H1 (cell line): ENCODE measurements at regions of chr12 and their contacts with region 1.

Region 1: DNA sequence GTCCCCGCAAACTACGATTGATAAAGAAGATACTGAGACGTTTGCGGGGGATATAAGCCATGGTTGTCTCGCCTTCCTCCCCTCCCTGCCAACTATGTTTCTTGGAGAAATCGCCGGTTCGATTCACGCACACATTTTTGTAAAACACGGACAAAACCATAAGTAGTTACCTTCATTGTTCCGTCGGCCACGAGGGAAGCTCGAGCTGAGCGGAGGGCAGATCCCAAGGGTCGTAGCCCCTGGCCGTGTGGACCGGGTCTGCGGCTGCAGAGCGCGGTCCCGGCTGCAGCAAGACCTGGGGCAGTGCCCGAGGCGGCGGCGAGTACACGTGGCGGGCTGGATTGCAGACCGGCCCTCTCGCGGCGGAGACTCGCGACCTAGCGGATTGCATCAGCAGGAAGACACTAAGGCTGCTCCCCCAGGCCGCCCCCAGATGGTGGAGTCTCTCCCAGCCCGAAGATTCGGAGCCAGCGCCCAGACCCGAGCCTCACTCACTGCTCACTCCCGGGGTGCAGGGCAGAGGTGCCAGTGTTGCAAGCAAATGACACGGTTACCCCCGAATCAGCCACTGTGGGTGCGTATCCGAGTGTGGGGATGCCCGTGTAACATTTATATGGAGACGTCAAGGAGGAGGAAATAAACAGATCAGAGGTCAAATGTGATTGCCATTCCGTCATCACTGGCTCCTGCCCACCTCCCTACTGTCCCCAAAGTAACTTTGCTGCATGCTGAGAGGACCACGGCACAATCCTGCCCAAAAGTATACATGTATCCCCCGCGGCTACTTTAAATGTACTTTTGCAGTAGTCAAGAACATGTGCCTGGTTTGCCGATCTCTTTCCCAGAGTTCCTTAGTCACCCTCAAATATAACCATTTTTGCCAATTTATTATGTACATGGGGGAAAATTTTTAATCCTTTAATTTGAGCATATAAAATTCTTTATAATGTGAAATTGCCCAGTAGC is at the start of gene BCAT1:
- DNase-seq: peak; percentile 57 to 79
- H3K4me3 ChIP-seq: peak within 1 kb of the TSS; percentile 92 to 96 (median 94)
- H3K27ac ChIP-seq: peak within 1 kb of the TSS; percentile 96
- H3K4me1 ChIP-seq: peaks cover 6 to 29% (median 25%) of the 10 kb centered on the region in 4 experiments; a peak in 6 of 7 replicates
- H3K27me3 ChIP-seq: no peaks in the 10 kb centered on the region
- CTCF ChIP-seq: no peak
- EP300 ChIP-seq: no peak
- POLR2A ChIP-seq: peak; percentile 78 to 90
- RAD21 ChIP-seq: peak in 1 of 2 experiments; percentile 2; a peak in 1 of 4 replicates
- total RNA-seq, gene BCAT1: 256 and 263 TPM in 2 replicates

Region 2: DNA sequence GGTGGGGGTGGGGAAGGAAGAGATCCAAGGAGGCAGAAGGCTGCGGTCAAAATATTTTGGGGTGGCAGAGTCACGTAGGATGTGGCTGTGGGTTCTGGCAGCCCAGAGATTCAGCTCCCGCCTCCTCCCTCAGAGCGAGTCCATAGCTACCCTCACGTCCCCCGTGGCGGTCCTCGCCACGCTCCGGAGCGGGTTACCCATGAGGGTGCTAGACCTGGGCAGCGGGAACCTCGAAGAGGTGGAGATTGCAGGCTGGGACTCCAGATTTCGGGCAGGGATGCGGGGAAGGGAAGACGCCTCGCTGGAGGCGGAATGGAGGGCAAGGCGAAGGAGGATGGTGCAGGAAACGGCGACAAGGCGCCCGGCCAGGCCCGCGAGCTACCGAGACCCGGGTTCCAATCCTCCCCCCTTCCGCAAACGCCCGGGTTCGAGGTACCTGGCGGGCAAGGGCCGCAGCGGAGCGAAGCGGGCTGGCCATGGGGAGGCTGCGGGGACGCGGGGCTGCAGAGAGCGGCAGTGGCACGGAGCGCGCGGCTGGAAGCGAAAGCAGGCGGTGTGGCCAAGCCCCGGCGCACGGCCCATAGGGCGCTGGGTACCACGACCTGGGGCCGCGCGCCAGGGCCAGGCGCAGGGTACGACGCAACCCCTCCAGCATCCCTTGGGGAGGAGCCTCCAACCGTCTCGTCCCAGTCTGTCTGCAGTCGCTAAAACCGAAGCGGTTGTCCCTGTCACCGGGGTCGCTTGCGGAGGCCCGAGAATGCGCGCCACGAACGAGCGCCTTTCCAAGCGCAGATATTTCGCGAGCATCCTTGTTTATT is 46.3 kb before region 1 on chr12:
- CTCF ChIA-PET with region 1: interaction called, 3 read pairs
- POLR2A ChIA-PET with region 1: interaction called, 125 read pairs
- DNase-seq: peak in 1 of 2 experiments; percentile 77
- H3K4me3 ChIP-seq: peak overlapping the region; percentile 43 to 71 (median 62)
- H3K27ac ChIP-seq: no peak overlapping the region
- H3K4me1 ChIP-seq: peaks cover 0 to 18% (median 15%) of the 10 kb centered on the region in 4 experiments; a peak in 4 of 7 replicates
- H3K27me3 ChIP-seq: no peaks in the 10 kb centered on the region
- CTCF ChIP-seq: no peak
- EP300 ChIP-seq: no peak
- POLR2A ChIP-seq: peak in 1 of 2 experiments; percentile 75; a peak in 2 of 3 replicates
- RAD21 ChIP-seq: no peak

Region 3: GRCh38 chr12:24909667-24910066 is 39.4 kb before region 1 on chr12:
- CTCF ChIA-PET with region 1: no interaction called
- POLR2A ChIA-PET with region 1: interaction called, 125 read pairs
- DNase-seq: peak in 1 of 2 experiments; percentile 37
- H3K4me3 ChIP-seq: no peak overlapping the region
- H3K27ac ChIP-seq: no peak overlapping the region
- H3K4me1 ChIP-seq: peaks cover 0 to 14% (median 8%) of the 10 kb centered on the region in 4 experiments; a peak in 4 of 7 replicates
- H3K27me3 ChIP-seq: no peaks in the 10 kb centered on the region
- CTCF ChIP-seq: no peak
- EP300 ChIP-seq: no peak
- POLR2A ChIP-seq: no peak
- RAD21 ChIP-seq: no peak

Region 4: DNA sequence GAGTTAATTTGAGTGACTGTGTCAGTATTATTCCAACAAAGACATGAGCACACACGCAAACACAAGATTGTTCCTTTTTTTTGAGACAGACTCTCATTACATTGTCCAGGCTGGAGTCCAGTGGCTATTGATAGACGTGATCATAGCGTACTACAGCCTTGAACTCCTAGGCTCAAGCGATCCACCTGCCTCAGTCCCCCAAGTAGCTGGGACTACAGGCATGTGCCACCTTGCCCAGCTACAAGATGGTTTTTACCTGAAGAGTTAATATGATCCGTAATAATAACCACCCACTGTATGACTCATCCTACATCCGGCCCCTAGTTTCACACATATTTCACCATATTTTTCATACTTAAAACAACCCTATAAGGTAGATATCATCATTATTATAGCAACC is 26.9 kb before region 1 on chr12:
- CTCF ChIA-PET with region 1: interaction called, 4 read pairs
- POLR2A ChIA-PET with region 1: interaction called, 468 read pairs
- DNase-seq: no peak
- H3K4me3 ChIP-seq: no peak overlapping the region
- H3K27ac ChIP-seq: no peak overlapping the region
- H3K4me1 ChIP-seq: peaks cover 0 to 4% (median 3%) of the 10 kb centered on the region in 4 experiments; a peak in 5 of 7 replicates
- H3K27me3 ChIP-seq: no peaks in the 10 kb centered on the region
- CTCF ChIP-seq: no peak
- EP300 ChIP-seq: no peak
- POLR2A ChIP-seq: no peak
- RAD21 ChIP-seq: no peak

Region 5: GRCh38 chr12:24931666-24932405 is 17.2 kb before region 1 on chr12:
- CTCF ChIA-PET with region 1: interaction called, 11 read pairs
- POLR2A ChIA-PET with region 1: interaction called, 468 read pairs
- DNase-seq: no peak
- H3K4me3 ChIP-seq: no peak overlapping the region
- H3K27ac ChIP-seq: no peak overlapping the region
- H3K4me1 ChIP-seq: peaks cover 1 to 21% (median 9%) of the 10 kb centered on the region in 4 experiments; a peak in 4 of 7 replicates
- H3K27me3 ChIP-seq: no peaks in the 10 kb centered on the region
- CTCF ChIP-seq: no peak
- EP300 ChIP-seq: no peak
- POLR2A ChIP-seq: no peak
- RAD21 ChIP-seq: no peak

Region 6: DNA sequence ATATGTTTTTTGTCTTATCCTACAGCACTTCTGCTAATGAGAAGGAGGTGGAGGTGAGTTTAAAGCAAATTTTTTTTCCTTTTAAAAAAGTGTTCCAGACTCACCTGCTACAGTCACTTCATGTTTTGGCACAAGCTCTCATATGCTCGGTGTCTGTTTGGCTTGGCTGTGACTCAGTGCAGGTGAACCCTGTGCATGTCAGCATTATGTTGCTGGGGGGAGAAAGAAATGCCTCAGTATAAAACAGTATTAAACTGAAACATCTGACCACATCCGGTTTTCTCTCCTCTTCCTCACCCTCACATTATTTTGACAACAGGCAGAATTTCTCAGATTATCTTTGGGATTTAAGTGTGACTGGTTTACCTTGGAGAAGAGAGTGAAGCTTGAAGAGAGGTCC is 140.7 kb after region 1 on chr12:
- CTCF ChIA-PET with region 1: no interaction called
- POLR2A ChIA-PET with region 1: no interaction called
- DNase-seq: no peak
- H3K4me3 ChIP-seq: no peak overlapping the region
- H3K27ac ChIP-seq: no peak overlapping the region
- H3K4me1 ChIP-seq: no peaks in the 10 kb centered on the region
- H3K27me3 ChIP-seq: no peaks in the 10 kb centered on the region
- CTCF ChIP-seq: no peak
- EP300 ChIP-seq: no peak
- POLR2A ChIP-seq: no peak
- RAD21 ChIP-seq: no peak